Activated CD4-positive, alpha-beta T cell treated with anti-CD3 and anti-CD28 coated beads for 36 hours (primary cell): ENCODE measurements at regions of chr2 and their contacts with region 1.

Region 1: GRCh38 chr2:60674524-60675165 is 81.4 kb upstream of the PAPOLG start:
- DNase-seq: peak; percentile 92
- ATAC-seq: peak; percentile 99
- H3K4me3 Mint-ChIP-seq: no peak overlapping the region
- H3K27ac Mint-ChIP-seq: no peak overlapping the region
- H3K4me1 Mint-ChIP-seq: no peaks in the 10 kb centered on the region
- H3K27me3 Mint-ChIP-seq: peaks cover 2% of the 10 kb centered on the region

Region 2: DNA sequence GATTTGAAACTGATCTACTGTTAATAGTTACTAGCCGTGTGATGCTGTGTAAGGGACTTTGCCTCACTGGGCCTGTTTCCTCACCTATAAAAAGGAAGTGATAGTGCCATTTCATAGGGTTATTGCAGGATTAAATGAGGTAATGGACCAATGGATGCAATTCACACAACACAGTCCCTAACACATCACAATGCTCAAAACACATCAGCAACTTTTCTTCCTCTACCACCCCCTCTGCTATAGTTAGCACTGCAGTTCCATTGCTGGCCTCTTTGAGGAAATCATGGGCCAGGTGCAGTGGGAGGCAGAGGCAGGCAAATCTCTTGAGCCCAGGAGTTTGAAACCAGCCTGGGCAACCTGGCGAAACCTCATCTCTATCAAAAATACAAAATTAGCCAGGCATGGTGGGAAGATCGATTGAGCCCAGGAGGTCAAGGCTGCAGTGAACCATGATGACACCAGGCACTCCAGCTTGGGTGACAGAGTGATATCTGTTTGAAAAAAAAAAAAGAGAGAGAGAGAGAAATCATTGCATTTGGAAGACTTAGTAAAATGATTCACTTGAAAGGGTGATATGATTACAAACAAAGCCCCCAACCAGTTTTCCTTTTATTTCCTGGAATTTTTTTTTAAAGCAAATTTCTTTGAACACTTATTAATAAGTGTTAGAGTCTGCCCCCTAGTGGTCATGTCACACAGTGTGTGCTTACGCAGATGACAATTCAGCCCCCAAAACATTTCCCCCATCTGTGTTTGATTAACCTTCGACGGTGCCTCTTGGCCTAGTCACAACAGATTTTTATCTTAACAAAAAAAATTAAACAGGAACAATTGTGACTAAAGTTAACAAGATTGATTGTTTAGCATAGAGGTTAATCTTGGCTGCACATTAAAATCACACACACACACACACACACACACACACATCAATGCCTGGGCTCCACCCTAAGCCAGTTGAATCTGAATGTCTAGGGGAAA is 32.5 kb before region 1 on chr2:
- CTCF ChIA-PET with region 1: interaction called, 11 read pairs
- POLR2A ChIA-PET with region 1: no interaction called
- intact Hi-C with region 1: no loop called
- DNase-seq: peak; percentile 47
- ATAC-seq: peak; percentile 55
- H3K4me3 Mint-ChIP-seq: no peak overlapping the region
- H3K27ac Mint-ChIP-seq: no peak overlapping the region
- H3K4me1 Mint-ChIP-seq: no peaks in the 10 kb centered on the region
- H3K27me3 Mint-ChIP-seq: no peaks in the 10 kb centered on the region

Region 3: GRCh38 chr2:60693551-60693950 is 18.9 kb after region 1 on chr2:
- CTCF ChIA-PET with region 1: interaction called, 22 read pairs
- POLR2A ChIA-PET with region 1: no interaction called
- intact Hi-C with region 1: no loop called
- DNase-seq: no peak
- ATAC-seq: no peak
- H3K4me3 Mint-ChIP-seq: no peak overlapping the region
- H3K27ac Mint-ChIP-seq: no peak overlapping the region
- H3K4me1 Mint-ChIP-seq: no peaks in the 10 kb centered on the region
- H3K27me3 Mint-ChIP-seq: no peaks in the 10 kb centered on the region